MCF 10A (cell line): ENCODE measurements at regions of chr16 and their contacts with region 1.

Region 1: GRCh38 chr16:67872786-67873537 is at the start of gene EDC4:
- DNase-seq: peak; percentile 71
- H3K4me3 Mint-ChIP-seq: peak within 1 kb of the TSS; percentile 89
- H3K27ac Mint-ChIP-seq: peak within 1 kb of the TSS; percentile 94
- H3K4me1 Mint-ChIP-seq: peaks cover 34% of the 10 kb centered on the region
- H3K27me3 Mint-ChIP-seq: no peaks in the 10 kb centered on the region
- CTCF ChIP-seq: no peak
- total RNA-seq, gene EDC4: 50.9 and 51.3 TPM in 2 replicates

Region 2: GRCh38 chr16:67685388-67686112 is 187.4 kb before region 1 on chr16:
- CTCF ChIA-PET with region 1: no interaction called
- POLR2A ChIA-PET with region 1: no interaction called
- intact Hi-C with region 1: no loop called
- DNase-seq: no peak
- H3K4me3 Mint-ChIP-seq: no peak overlapping the region
- H3K27ac Mint-ChIP-seq: no peak overlapping the region
- H3K4me1 Mint-ChIP-seq: no peaks in the 10 kb centered on the region
- H3K27me3 Mint-ChIP-seq: no peaks in the 10 kb centered on the region
- CTCF ChIP-seq: no peak

Region 3: DNA sequence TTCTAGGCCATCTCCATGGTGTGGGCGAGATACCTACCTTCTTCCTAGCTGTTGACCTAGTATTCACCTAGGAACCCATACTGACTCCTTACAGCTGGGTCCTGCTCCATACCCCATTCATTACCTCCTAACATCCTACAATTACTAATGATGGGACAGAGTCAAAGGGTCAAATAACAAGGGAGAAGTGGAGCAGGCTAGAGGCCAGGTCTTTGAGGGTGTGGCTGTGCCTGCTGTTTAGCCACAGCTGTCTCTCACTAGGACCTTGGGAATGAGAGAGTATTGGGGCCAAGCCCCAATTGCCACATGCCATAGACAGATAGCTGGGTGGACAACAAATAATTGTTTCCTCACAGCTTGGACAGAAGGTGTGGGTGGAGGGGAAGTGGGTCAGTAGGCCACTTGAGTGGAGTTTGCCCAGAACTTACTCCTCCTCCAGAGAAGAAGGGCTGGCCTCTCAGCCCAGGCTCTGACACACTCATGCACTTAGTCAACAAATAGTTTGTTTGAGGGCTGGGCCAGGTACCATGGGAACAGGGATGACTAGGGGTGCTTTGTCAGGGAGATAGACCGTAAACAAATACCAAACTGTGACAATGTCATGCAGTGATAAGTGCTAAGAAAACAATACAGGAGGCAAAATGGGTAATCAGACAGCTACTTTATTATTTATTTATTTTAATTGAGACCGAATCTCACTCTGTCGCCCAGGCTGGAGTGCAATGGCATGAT is 15.3 kb before region 1 on chr16:
- CTCF ChIA-PET with region 1: interaction called, 4 read pairs
- POLR2A ChIA-PET with region 1: interaction called, 23 read pairs
- intact Hi-C with region 1: no loop called
- DNase-seq: peak; percentile 90
- H3K4me3 Mint-ChIP-seq: peak overlapping the region; percentile 54
- H3K27ac Mint-ChIP-seq: peak overlapping the region; percentile 99
- H3K4me1 Mint-ChIP-seq: peaks cover 38% of the 10 kb centered on the region
- H3K27me3 Mint-ChIP-seq: no peaks in the 10 kb centered on the region
- CTCF ChIP-seq: no peak